GM10248 (cell line): ENCODE measurements at regions of chr18 and their contacts with region 1.

Region 1: GRCh38 chr18:35143622-35144596 is 96.9 kb upstream of the ZNF397 start:
- DNase-seq: peak; percentile 34
- CTCF ChIP-seq: peak; percentile 64

Region 2: DNA sequence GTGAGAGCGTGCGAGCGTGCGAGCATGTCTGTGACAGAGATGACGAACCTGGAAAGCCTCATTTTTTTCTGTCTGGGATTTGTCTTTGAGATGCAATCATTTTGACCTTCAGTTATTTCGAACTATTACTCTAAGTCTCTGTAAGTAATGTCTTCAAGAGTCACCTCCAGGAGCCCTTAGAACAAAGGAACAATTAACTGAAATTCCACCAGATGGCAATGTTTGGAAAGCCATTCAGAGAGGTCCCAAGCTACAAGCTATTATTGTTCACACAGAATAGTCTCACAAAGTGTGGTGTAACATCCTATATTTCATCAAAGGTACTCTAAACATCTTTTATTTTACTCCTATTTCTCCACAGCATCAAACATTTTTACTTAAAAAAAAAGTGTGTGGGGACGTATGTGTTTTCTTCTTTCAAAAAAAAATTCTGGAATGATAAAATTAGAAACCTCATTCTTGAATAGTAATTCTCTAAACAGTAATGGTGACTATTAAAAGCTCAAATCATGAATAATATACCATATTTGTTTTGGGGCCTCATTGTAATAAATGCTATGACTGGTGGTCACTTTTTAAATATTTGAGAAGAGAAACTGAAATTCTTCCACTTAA is 137.8 kb before region 1 on chr18:
- CTCF ChIA-PET with region 1: interaction called, 35 read pairs
- POLR2A ChIA-PET with region 1: no interaction called
- DNase-seq: peak; percentile 60
- CTCF ChIP-seq: peak; percentile 56

Region 3: DNA sequence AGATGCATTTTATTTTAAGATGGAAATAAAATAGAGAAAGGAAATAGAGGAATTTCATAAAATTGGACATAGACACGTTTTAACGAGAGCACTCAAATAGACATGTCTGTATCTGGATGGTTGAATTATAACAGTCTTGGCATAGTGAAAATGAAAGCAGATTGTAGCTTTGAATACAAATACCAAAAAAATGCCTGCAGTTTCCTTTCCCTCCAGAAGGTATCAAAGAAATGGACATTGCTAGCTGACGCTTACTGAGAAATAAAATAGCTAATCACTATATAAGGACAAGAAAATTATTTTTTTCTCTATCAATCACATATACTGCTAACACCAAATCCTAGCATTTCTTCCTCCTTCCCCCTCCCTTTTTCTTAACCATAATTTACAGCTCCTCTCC is 114.1 kb before region 1 on chr18:
- CTCF ChIA-PET with region 1: interaction called, 98 read pairs
- POLR2A ChIA-PET with region 1: no interaction called
- DNase-seq: peak; percentile 36
- CTCF ChIP-seq: no peak

Region 4: DNA sequence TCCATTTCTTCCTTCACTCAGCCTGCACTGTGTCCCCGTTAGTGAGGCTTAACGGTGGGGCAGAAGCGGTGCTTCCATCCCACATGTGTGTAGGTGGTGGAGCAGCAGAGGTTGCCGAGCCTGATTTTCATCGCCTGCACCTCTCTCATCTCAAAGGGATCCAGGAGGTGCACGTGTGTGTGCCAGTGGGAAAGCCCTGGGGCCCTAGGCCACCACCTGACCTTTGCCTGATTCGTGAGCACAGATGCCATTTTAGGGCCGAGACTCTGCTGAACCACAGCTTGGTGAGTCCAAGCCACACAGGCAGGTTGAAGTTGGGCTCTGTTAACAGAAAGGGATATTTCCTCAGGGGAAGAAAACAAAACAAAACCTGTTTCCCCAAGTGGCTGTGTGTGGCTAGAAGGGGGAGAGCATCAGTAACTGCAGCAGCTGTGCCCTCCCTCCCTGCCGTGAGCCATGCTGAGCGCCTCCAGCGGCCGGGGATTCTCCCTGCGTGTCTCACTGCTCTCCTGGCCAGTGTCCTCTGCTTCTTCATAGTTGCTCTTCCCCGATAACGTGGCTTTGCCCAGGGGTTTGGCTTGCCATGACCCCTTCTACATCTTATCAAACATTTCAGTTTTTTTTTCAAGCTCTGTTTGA is 21.2 kb before region 1 on chr18:
- CTCF ChIA-PET with region 1: interaction called, 17 read pairs
- POLR2A ChIA-PET with region 1: no interaction called
- DNase-seq: no peak
- CTCF ChIP-seq: peak; percentile 27

Region 5: GRCh38 chr18:35132021-35132902 is 11.6 kb before region 1 on chr18:
- CTCF ChIA-PET with region 1: interaction called, 24 read pairs
- POLR2A ChIA-PET with region 1: no interaction called
- DNase-seq: no peak
- CTCF ChIP-seq: no peak